ENCODE measurements at regions of chr2 and their contacts with region 1.

Region 1: GRCh38 chr2:47272031-47272864 is 117.1 kb upstream of the STPG4 start:
- DNase-seq: no peak
- H3K4me3 ChIP-seq: peak overlapping the region; percentile 32
- CTCF ChIP-seq: peak; percentile 97

Region 2: GRCh38 chr2:47046271-47046670 is 226.0 kb before region 1 on chr2:
- CTCF ChIA-PET with region 1: no interaction called
- POLR2A ChIA-PET with region 1: no interaction called
- DNase-seq: no peak
- H3K4me3 ChIP-seq: no peak overlapping the region
- CTCF ChIP-seq: no peak

Region 3: GRCh38 chr2:47174733-47175361 is 97.4 kb before region 1 on chr2:
- CTCF ChIA-PET with region 1: interaction called, 34 read pairs
- POLR2A ChIA-PET with region 1: interaction called, 4 read pairs
- DNase-seq: no peak
- H3K4me3 ChIP-seq: peak overlapping the region; percentile 95
- CTCF ChIP-seq: no peak

Region 4: DNA sequence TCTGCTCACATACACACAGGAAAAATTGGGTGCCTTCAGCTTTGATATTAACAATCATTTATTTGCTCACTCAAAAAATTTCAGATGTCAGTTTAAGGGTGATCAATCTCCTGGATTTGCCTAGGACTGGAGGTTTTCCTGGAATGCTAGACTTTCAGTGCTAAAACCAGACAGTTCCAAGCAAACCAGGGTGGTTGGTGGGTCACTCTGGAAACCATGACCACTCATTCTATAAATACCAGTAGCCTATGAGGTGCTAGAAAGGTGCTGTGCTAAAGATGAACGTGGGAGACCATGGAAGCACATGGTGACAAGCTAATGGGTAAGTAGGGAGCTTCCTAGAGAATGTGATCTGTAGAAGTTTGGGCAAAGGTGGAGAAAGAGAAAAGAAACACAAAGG is 91.7 kb before region 1 on chr2:
- CTCF ChIA-PET with region 1: interaction called, 29 read pairs
- POLR2A ChIA-PET with region 1: no interaction called
- DNase-seq: no peak
- H3K4me3 ChIP-seq: no peak overlapping the region
- CTCF ChIP-seq: no peak

Region 5: DNA sequence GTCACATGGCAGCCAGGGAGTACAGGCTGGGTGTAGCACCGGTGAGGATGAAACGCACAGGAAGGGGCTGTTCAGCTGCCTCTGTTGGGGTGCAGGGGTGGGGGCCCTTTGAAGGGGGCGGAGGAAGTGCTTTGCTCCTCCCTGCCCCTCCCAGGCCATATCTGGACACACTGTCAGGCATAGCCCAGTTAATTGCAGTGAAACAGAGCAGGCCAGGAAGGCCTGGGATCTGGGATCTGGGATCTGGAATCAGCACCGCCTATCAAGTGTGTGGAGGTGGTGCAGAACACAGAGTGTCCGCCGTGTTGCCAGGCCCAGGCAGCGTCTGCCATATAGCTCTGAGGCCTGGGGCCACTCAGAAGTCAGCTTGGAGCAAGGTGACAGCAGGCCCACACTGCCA is 11.4 kb after region 1 on chr2:
- CTCF ChIA-PET with region 1: interaction called, 56 read pairs
- POLR2A ChIA-PET with region 1: no interaction called
- DNase-seq: no peak
- H3K4me3 ChIP-seq: no peak overlapping the region
- CTCF ChIP-seq: no peak

Region 6: GRCh38 chr2:47336259-47337238 is 64.3 kb after region 1 on chr2:
- CTCF ChIA-PET with region 1: no interaction called
- POLR2A ChIA-PET with region 1: no interaction called
- DNase-seq: no peak
- H3K4me3 ChIP-seq: no peak overlapping the region
- CTCF ChIP-seq: no peak

Measured in AG04449 (cell line).